Vagina (tissue), 2 donors: ENCODE measurements at regions of chr22 and their contacts with region 1.

Region 1: DNA sequence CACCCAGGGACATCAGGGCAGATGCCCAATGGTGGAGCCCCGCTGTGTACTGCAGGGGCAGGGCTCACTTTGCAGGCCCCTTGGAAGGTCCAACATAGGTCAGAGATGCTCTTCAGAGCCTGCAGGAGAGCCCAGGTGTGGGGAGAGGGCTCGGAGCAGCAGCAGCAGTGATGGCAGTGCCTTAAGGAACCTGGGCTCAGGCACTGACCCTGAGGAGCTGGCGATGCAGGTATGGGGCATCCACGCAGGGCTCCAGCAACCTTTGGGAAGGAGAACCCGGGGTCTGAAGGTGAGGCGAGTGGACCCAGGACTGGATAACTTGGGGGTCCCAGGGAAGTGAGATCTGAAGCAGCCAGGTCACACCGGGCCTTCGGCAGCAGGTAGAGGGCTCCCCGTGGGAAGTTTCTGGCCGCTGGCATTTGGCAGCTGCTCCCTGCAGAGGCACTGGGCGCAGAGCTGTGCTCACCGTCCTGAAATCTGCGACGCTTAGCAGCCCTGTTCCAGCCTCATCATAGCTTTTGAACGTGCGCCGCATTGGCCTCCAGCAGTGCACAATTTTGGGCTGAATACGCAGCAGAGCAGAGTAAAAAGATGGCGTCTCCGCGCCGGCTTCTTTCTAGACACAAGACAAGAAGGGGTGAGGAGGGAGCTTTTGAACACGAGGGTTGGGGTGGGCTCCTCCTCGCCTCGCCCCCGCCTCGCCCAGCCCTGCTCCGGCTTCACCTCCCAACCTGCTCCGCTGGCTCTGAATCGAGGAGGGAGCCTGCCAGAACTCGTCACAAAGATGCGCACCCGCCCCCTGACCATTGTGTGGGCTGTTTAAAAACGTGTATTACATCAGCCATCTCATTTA is 118.8 kb downstream of the MPPED1 start:
- DNase-seq: no peak
- H3K4me3 ChIP-seq: no peak overlapping the region
- H3K27ac ChIP-seq: no peak overlapping the region
- H3K4me1 ChIP-seq: peaks cover 7% of the 10 kb centered on the region
- H3K27me3 ChIP-seq: no peaks in the 10 kb centered on the region
- CTCF ChIP-seq: no peak
- POLR2A ChIP-seq: no peak

Region 2: GRCh38 chr22:43263645-43264514 is 266.7 kb before region 1 on chr22:
- intact Hi-C with region 1: no loop called
- DNase-seq: no peak
- H3K4me3 ChIP-seq: no peak overlapping the region
- H3K27ac ChIP-seq: no peak overlapping the region
- H3K4me1 ChIP-seq: peaks cover 23% of the 10 kb centered on the region
- H3K27me3 ChIP-seq: no peaks in the 10 kb centered on the region
- CTCF ChIP-seq: no peak
- POLR2A ChIP-seq: no peak

Region 3: DNA sequence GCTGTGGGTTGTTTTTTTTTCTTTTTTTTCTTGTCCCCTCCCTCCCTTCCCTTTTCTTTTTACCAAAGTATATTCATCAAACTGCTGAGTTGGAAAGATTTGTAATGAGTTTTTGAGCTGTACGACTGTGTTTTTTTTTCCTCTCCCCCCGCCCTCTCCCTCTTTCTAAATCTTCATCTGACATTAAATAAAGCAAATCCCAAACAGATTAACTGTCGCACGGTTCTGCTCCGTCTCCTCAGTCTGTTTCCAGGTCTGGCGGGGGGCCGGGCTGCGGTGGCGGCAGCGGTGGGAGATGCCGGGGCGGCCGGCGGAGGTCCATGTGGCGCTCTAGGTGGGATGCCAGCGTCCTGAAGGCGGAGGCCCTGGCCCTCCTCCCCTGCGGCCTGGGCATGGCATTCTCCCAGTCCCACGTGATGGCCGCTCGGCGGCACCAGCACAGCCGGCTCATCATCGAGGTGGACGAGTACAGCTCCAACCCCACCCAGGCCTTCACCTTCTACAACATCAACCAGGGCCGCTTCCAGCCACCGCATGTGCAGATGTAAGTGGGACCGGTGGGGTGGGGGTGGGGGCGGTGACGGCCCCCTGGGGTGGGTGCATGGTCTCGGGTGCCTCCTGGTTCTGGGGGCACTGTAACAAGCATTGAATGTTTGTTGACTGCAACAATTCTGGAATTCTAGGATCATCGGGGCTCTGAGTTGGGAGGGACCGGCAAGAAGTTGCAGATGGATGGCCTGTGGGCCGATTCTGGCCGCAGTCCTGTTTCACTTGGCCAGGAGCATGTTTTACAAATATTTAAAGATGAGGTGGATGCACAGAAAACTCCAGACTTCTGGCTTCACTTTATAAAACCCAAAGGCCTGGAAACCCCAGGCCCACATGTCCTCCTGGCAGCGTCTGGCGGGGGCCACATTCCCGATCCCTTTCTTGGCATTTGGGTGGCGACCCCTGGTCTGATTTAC is 105.6 kb before region 1 on chr22:
- intact Hi-C with region 1: no loop called
- DNase-seq: no peak
- H3K4me3 ChIP-seq: no peak overlapping the region
- H3K27ac ChIP-seq: no peak overlapping the region
- H3K4me1 ChIP-seq: no peaks in the 10 kb centered on the region
- H3K27me3 ChIP-seq: no peaks in the 10 kb centered on the region
- CTCF ChIP-seq: no peak
- POLR2A ChIP-seq: no peak

Region 4: GRCh38 chr22:44316393-44317122 is 786.0 kb after region 1 on chr22:
- intact Hi-C with region 1: loop called (anchors 5 kb)
- DNase-seq: no peak
- H3K4me3 ChIP-seq: no peak overlapping the region
- H3K27ac ChIP-seq: no peak overlapping the region
- H3K4me1 ChIP-seq: peaks cover 18% of the 10 kb centered on the region
- H3K27me3 ChIP-seq: no peaks in the 10 kb centered on the region
- CTCF ChIP-seq: no peak
- POLR2A ChIP-seq: no peak